ENCODE measurements at regions of chr7 and their contacts with region 1.

Region 1: DNA sequence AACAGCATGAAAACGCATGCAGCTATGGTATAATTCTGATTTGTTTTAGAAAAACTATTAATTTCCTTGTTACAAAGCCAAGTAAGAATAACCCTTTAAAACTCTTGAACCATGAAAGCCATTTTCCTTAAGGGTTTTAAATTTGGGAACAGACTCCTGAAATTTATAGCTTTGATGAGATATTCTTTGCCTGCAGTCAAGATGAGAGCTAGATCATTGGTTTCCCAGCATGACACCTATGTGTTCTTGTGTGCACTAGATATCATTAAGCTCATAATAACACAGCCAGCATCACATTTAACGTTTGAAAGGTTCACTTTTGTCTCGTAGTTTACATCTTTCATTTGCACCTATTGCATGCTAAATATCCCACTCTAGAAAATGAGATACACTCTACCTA is 202.2 kb downstream of the PHF14 start:
- DNase-seq: no peak
- H3K4me3 ChIP-seq: no peak overlapping the region
- H3K27ac ChIP-seq: peak overlapping the region in 1 of 2 experiments; percentile 28; a peak in 1 of 4 replicates
- H3K4me1 ChIP-seq: peaks cover 6 to 29% of the 10 kb centered on the region in 2 experiments; a peak in 3 of 4 replicates
- H3K27me3 ChIP-seq: no peaks in the 10 kb centered on the region
- CTCF ChIP-seq: no peak
- EP300 ChIP-seq: no peak
- RAD21 ChIP-seq: no peak

Region 2: GRCh38 chr7:11188529-11189310 is 12.8 kb after region 1 on chr7:
- CTCF ChIA-PET with region 1: interaction called, 12 read pairs
- POLR2A ChIA-PET with region 1: no interaction called
- DNase-seq: no peak
- H3K4me3 ChIP-seq: no peak overlapping the region
- H3K27ac ChIP-seq: no peak overlapping the region
- H3K4me1 ChIP-seq: peaks cover 0 to 8% of the 10 kb centered on the region in 2 experiments; a peak in 2 of 4 replicates
- H3K27me3 ChIP-seq: no peaks in the 10 kb centered on the region
- CTCF ChIP-seq: no peak
- EP300 ChIP-seq: no peak
- RAD21 ChIP-seq: no peak